Activated CD8-positive, alpha-beta T cell treated with anti-CD3 and anti-CD28 coated beads for 36 hours (primary cell): ENCODE measurements at regions of chr1 and their contacts with region 1.

Region 1: GRCh38 chr1:36369061-36369861 is 16.5 kb downstream of the STK40 start:
- DNase-seq: peak; percentile 93
- ATAC-seq: peak; percentile 57
- H3K4me3 Mint-ChIP-seq: no peak overlapping the region
- H3K27ac Mint-ChIP-seq: peak overlapping the region; percentile 34
- H3K4me1 Mint-ChIP-seq: peaks cover 67% of the 10 kb centered on the region
- H3K27me3 Mint-ChIP-seq: no peaks in the 10 kb centered on the region
- CTCF ChIP-seq: peak; percentile 89

Region 2: GRCh38 chr1:36248250-36248894 is 120.9 kb before region 1 on chr1:
- CTCF ChIA-PET with region 1: no interaction called
- POLR2A ChIA-PET with region 1: no interaction called
- intact Hi-C with region 1: no loop called
- DNase-seq: no peak
- ATAC-seq: no peak
- H3K4me3 Mint-ChIP-seq: no peak overlapping the region
- H3K27ac Mint-ChIP-seq: peak overlapping the region; percentile 76
- H3K4me1 Mint-ChIP-seq: peaks cover 52% of the 10 kb centered on the region
- H3K27me3 Mint-ChIP-seq: no peaks in the 10 kb centered on the region
- CTCF ChIP-seq: no peak

Region 3: GRCh38 chr1:36323597-36324352 is 45.5 kb before region 1 on chr1 and contains the start of gene EVA1B:
- CTCF ChIA-PET with region 1: interaction called, 13 read pairs
- POLR2A ChIA-PET with region 1: interaction called, 6 read pairs
- intact Hi-C with region 1: no loop called
- DNase-seq: peak; percentile 68
- ATAC-seq: peak; percentile 43
- H3K4me3 Mint-ChIP-seq: peak within 1 kb of the TSS; percentile 75
- H3K27ac Mint-ChIP-seq: peak within 1 kb of the TSS; percentile 49
- H3K4me1 Mint-ChIP-seq: peaks cover 30% of the 10 kb centered on the region
- H3K27me3 Mint-ChIP-seq: peaks cover 5% of the 10 kb centered on the region
- CTCF ChIP-seq: no peak
- total RNA-seq, gene EVA1B: 5.8 to 6.5 TPM

Region 4: GRCh38 chr1:36342481-36343478 is 26.5 kb before region 1 on chr1:
- CTCF ChIA-PET with region 1: interaction called, 78 read pairs
- POLR2A ChIA-PET with region 1: no interaction called
- intact Hi-C with region 1: no loop called
- DNase-seq: peak; percentile 69
- ATAC-seq: peak; percentile 91
- H3K4me3 Mint-ChIP-seq: no peak overlapping the region
- H3K27ac Mint-ChIP-seq: peak overlapping the region; percentile 34
- H3K4me1 Mint-ChIP-seq: peaks cover 2% of the 10 kb centered on the region
- H3K27me3 Mint-ChIP-seq: no peaks in the 10 kb centered on the region
- CTCF ChIP-seq: peak; percentile 83

Region 5: DNA sequence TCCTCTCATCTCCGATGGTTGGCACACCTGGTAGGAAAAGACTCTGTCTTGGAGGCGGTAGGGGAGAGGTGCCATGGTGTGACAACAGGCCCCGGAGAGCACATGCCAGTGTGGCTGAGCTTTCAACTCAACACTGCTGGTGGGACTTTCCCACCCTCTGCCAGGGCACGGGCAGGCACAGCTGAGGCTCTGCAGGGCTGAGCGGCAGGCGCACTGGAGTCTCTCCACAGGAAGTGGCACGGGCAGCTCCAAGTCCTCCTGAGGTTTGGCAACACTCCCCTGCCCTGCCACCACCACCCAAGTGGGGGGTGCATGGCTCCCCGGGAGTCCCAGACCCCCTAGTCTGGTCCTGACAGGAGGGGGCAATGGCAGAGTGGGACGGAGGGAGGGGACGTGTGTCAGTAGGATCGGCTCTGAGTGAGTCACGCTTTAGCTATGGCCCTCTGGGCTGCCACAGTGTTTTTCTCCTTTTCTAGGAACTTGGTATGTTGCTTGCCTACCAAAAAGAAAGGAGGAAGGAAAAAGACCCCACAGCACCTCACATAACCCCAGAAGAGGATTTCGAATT is 18.5 kb before region 1 on chr1:
- CTCF ChIA-PET with region 1: interaction called, 102 read pairs
- POLR2A ChIA-PET with region 1: no interaction called
- intact Hi-C with region 1: no loop called
- DNase-seq: peak; percentile 61
- ATAC-seq: peak; percentile 86
- H3K4me3 Mint-ChIP-seq: no peak overlapping the region
- H3K27ac Mint-ChIP-seq: peak overlapping the region; percentile 80
- H3K4me1 Mint-ChIP-seq: peaks cover 24% of the 10 kb centered on the region
- H3K27me3 Mint-ChIP-seq: no peaks in the 10 kb centered on the region
- CTCF ChIP-seq: no peak

Region 6: GRCh38 chr1:36385410-36386257 is 16.4 kb after region 1 on chr1 and contains the start of gene STK40:
- CTCF ChIA-PET with region 1: interaction called, 30 read pairs
- POLR2A ChIA-PET with region 1: no interaction called
- intact Hi-C with region 1: no loop called
- DNase-seq: peak; percentile 98
- ATAC-seq: peak; percentile 90
- H3K4me3 Mint-ChIP-seq: peak within 1 kb of the TSS; percentile 80
- H3K27ac Mint-ChIP-seq: peak within 1 kb of the TSS; percentile 98
- H3K4me1 Mint-ChIP-seq: peaks cover 46% of the 10 kb centered on the region
- H3K27me3 Mint-ChIP-seq: no peaks in the 10 kb centered on the region
- CTCF ChIP-seq: no peak
- total RNA-seq, gene STK40: 41.2 to 44.4 TPM

Region 7: GRCh38 chr1:36420836-36421664 is 51.8 kb after region 1 on chr1:
- CTCF ChIA-PET with region 1: interaction called, 19 read pairs
- POLR2A ChIA-PET with region 1: no interaction called
- intact Hi-C with region 1: no loop called
- DNase-seq: peak; percentile 95
- ATAC-seq: peak; percentile 100
- H3K4me3 Mint-ChIP-seq: no peak overlapping the region
- H3K27ac Mint-ChIP-seq: peak overlapping the region; percentile 91
- H3K4me1 Mint-ChIP-seq: peaks cover 16% of the 10 kb centered on the region
- H3K27me3 Mint-ChIP-seq: no peaks in the 10 kb centered on the region
- CTCF ChIP-seq: peak; percentile 94